Posterior vena cava (tissue), 2 donors: ENCODE measurements at regions of chr6 and their contacts with region 1.

Region 1: GRCh38 chr6:106085984-106086813 is at the start of gene PRDM1:
- DNase-seq: peak; percentile 90
- total RNA-seq, gene PRDM1: 2.4 to 2.9 TPM

Region 2: DNA sequence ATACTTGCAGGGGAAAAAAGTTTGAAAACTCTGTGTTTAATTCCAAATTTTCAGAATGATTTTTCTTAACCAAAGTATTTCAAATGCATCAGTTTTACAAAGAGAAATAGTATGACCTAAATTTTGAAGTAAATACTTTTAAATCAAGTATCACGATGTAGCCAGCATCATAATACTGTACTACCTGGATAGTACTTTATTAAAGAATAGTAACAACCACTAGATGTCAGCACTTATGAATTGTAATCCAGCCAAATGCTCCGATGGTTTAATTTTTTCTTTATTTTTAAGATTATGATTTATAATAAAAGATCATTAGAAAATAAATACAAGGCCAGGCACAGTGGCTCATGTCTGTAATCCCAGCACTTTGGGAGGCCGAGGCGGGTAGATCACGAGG is 1189.3 kb before region 1 on chr6:
- intact Hi-C with region 1: loop called in 1 of 2 experiments (anchors 10 kb)
- DNase-seq: no peak

Region 3: DNA sequence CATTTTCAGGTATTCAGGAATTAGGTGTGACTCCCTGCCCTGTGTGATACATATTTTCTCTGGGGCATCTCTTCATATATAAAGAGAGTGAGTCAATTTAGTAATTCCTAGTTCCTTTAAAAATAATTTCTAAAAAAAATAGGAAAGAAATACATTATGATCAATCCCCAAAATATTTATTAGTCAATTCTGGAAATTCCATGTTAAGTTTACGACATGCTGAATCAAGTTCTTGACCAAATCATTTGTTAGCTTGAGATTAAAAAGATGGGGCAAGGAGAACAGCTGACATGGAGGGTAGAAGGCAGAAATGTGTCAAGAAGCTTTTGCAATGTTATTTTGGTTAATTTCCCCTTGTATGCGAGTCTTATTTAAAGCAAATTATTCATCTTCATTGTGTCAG is 22.8 kb before region 1 on chr6:
- intact Hi-C with region 1: no loop called
- DNase-seq: no peak

Region 4: GRCh38 chr6:106134906-106135634 is 48.9 kb after region 1 on chr6:
- intact Hi-C with region 1: loop called in 1 of 2 experiments (anchors 1 kb)
- DNase-seq: no peak